ENCODE measurements at regions of chr1 and their contacts with region 1.

Region 1: GRCh38 chr1:184792450-184792969 is 37.9 kb upstream of the EDEM3 start:
- DNase-seq: peak; percentile 87 to 97 (median 96)
- H3K4me3 ChIP-seq: peak overlapping the region in 1 of 3 experiments; percentile 53
- H3K4me3 Mint-ChIP-seq: peak overlapping the region; percentile 37 to 79
- H3K27ac ChIP-seq: peak overlapping the region; percentile 77
- H3K27ac Mint-ChIP-seq: peak overlapping the region; percentile 79 to 95 (median 89)
- H3K4me1 ChIP-seq: peaks cover 36 to 55% of the 10 kb centered on the region in 2 donors
- H3K4me1 Mint-ChIP-seq: peaks cover 50% of the 10 kb centered on the region
- H3K27me3 ChIP-seq: no peaks in the 10 kb centered on the region
- H3K27me3 Mint-ChIP-seq: peaks cover 0 to 2% (median 0%) of the 10 kb centered on the region in 3 donors
- CTCF ChIP-seq: no peak

Region 2: GRCh38 chr1:184754476-184755225 is 37.9 kb before region 1 on chr1 and contains the start of gene EDEM3:
- intact Hi-C with region 1: loop called in 1 of 2 experiments (anchors 2 kb)
- DNase-seq: peak; percentile 99
- H3K4me3 ChIP-seq: peak within 1 kb of the TSS; percentile 88 to 100 (median 97)
- H3K4me3 Mint-ChIP-seq: peak within 1 kb of the TSS; percentile 91 to 97
- H3K27ac ChIP-seq: peak within 1 kb of the TSS; percentile 88 to 91
- H3K27ac Mint-ChIP-seq: peak within 1 kb of the TSS; percentile 89 to 97 (median 95)
- H3K4me1 ChIP-seq: peaks cover 17 to 44% of the 10 kb centered on the region in 2 donors
- H3K4me1 Mint-ChIP-seq: peaks cover 32% of the 10 kb centered on the region
- H3K27me3 ChIP-seq: no peaks in the 10 kb centered on the region
- H3K27me3 Mint-ChIP-seq: peaks cover 0 to 2% (median 0%) of the 10 kb centered on the region in 3 donors
- CTCF ChIP-seq: no peak
- polyA plus RNA-seq, gene EDEM3: 15.5 to 21.9 (median 18.0) TPM

Region 3: GRCh38 chr1:185534801-185535200 is 742.3 kb after region 1 on chr1:
- intact Hi-C with region 1: no loop called
- DNase-seq: peak; percentile 72 to 88 (median 75)
- H3K4me3 ChIP-seq: peak overlapping the region in 1 of 3 experiments; percentile 50
- H3K4me3 Mint-ChIP-seq: peak overlapping the region in 1 of 2 donors; percentile 39
- H3K27ac ChIP-seq: peak overlapping the region; percentile 1 to 87
- H3K27ac Mint-ChIP-seq: peak overlapping the region; percentile 86 to 96 (median 92)
- H3K4me1 ChIP-seq: peaks cover 25 to 40% of the 10 kb centered on the region in 2 donors
- H3K4me1 Mint-ChIP-seq: peaks cover 34% of the 10 kb centered on the region
- H3K27me3 ChIP-seq: no peaks in the 10 kb centered on the region
- H3K27me3 Mint-ChIP-seq: peaks cover 0 to 2% (median 0%) of the 10 kb centered on the region in 3 donors
- CTCF ChIP-seq: no peak

Measured in CD14-positive monocyte (primary cell).